ENCODE measurements at regions of chr4 and their contacts with region 1.

Region 1: GRCh38 chr4:2462218-2462991 is 6.5 kb upstream of the RNF4 start:
- DNase-seq: peak; percentile 72
- ATAC-seq: peak; percentile 97
- H3K4me3 Mint-ChIP-seq: peak overlapping the region; percentile 77
- H3K27ac Mint-ChIP-seq: no peak overlapping the region
- H3K4me1 Mint-ChIP-seq: peaks cover 11% of the 10 kb centered on the region
- H3K27me3 Mint-ChIP-seq: peaks cover 4% of the 10 kb centered on the region
- CTCF ChIP-seq: no peak

Region 2: DNA sequence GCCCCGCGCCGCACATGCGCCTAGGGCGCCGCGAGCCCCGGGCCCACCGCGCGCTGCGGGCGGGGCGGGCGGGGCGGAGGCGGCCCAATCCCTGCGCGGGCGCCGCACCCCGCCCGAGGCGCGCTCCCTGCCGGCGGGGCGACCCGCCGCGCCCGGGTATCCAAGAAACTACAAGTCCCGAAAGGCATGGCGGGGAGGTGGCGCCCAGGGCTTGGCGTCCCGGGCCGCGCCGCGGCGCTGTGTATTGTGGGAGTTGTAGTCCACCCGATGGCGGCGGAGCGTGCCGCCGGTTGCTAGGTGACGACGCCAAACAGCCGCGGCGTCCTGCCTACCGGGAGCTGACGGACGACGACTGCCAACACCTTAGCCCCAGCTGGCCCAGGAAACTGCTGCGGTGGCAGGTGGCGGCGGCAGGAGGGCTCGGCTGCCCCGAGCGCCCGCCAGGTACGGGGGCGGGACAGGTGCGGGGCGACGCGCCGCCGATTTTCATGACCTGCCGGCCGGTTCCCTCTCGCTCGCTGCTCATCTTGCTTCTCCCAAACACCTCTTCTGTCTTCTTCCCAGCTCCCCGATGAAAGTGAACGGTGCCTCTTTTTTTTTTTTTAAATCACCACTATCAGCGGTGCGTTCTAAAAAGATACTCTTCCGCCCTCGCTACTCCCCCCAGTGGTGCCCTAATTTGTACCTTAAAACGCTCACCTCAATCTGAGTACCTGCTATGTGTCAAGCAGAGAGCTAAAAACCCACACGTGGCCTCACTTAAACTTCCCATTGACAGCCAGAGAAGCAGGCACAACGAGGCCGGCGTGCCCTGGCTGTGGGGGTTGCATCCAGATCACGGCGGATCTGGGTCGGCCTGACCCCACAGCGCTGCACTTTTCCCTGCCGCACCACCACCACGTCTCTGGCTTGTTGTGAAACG is 43.5 kb before region 1 on chr4 and contains the start of gene CFAP99:
- CTCF ChIA-PET with region 1: no interaction called
- POLR2A ChIA-PET with region 1: interaction called, 3 read pairs
- intact Hi-C with region 1: loop called (anchors 1 kb)
- DNase-seq: peak; percentile 93
- ATAC-seq: peak; percentile 91
- H3K4me3 Mint-ChIP-seq: peak within 1 kb of the TSS; percentile 91
- H3K27ac Mint-ChIP-seq: peak within 1 kb of the TSS; percentile 90
- H3K4me1 Mint-ChIP-seq: peaks cover 39% of the 10 kb centered on the region
- H3K27me3 Mint-ChIP-seq: peaks cover 28% of the 10 kb centered on the region
- CTCF ChIP-seq: no peak
- total RNA-seq, gene CFAP99: not detected in 2 replicates